Breast epithelium (tissue), 4 donors: ENCODE measurements at regions of chr7 and their contacts with region 1.

Region 1: DNA sequence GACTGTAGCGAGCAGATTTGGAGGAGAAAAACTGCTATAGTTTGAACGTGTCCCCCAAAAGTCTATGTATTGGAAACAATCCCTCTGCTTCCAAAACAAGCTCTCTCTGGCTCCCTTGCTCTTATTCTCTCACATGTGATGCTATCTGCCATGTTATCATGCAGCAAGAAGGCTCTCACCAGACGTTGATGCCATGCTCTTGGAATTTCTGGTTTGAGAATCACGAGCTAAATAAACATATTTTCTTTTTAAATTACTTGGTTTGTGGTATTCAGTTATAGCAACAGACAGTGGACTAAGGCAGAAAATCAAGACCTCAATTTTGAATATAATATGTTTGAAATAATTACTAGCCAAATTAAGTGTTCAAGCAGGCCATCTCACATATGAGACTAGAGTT is 17.5 kb upstream of the GNAT3 start:
- DNase-seq: no peak
- H3K4me3 ChIP-seq: no peak overlapping the region
- H3K27ac ChIP-seq: no peak overlapping the region
- H3K4me1 ChIP-seq: no peaks in the 10 kb centered on the region
- H3K27me3 ChIP-seq: no peaks in the 10 kb centered on the region
- CTCF ChIP-seq: no peak
- POLR2A ChIP-seq: no peak

Region 2: GRCh38 chr7:79361214-79361613 is 1168.1 kb before region 1 on chr7:
- intact Hi-C with region 1: loop called (anchors 5 kb)
- DNase-seq: no peak
- H3K4me3 ChIP-seq: no peak overlapping the region
- H3K27ac ChIP-seq: no peak overlapping the region
- H3K4me1 ChIP-seq: no peaks in the 10 kb centered on the region
- H3K27me3 ChIP-seq: no peaks in the 10 kb centered on the region
- CTCF ChIP-seq: no peak
- POLR2A ChIP-seq: no peak